Ascending aorta (tissue), 2 donors: ENCODE measurements at regions of chr21 and their contacts with region 1.

Region 1: DNA sequence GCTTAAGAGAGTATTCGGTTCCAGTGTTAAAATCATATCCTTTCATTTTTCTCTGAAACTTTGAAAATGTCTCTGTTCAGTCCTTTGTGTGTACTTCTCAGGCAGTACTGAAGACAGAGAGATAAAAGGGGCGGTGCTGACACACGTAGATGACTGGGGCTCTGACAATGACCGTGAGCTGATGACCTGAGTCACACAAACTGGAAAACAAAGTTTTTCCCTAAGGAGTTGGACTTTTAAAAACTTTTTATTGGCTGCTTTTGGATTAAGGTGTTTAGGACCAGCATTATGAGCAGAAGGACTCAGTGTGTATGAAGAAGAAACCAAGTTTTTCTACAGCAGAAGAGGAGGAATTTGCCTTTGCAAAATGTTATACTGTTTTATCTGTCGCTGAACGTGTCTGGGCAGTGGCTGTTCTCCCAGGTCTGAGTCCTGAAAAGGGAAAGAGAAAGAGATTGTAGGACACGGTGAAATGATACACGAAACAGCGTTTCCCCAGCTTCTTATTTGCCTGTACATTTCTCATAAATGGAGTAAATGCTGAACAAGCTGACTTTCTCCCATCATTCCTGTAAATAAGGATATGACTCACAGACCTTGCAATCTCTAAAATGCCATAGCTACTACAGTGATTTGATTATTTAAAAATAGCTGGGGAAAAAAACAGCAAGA is 51.5 kb downstream of the MAP3K7CL start:
- DNase-seq: no peak
- H3K4me3 ChIP-seq: peak overlapping the region; percentile 47 to 58
- H3K27ac ChIP-seq: peak overlapping the region; percentile 91 to 95
- H3K4me1 ChIP-seq: peaks cover 0 to 23% of the 10 kb centered on the region in 2 donors
- H3K27me3 ChIP-seq: no peaks in the 10 kb centered on the region
- CTCF ChIP-seq: no peak

Region 2: GRCh38 chr21:29125191-29125590 is 56.7 kb before region 1 on chr21:
- intact Hi-C with region 1: no loop called
- DNase-seq: no peak
- H3K4me3 ChIP-seq: no peak overlapping the region
- H3K27ac ChIP-seq: no peak overlapping the region
- H3K4me1 ChIP-seq: peaks cover 0 to 3% of the 10 kb centered on the region in 2 donors
- H3K27me3 ChIP-seq: no peaks in the 10 kb centered on the region
- CTCF ChIP-seq: no peak

Region 3: GRCh38 chr21:29208682-29209059 is 26.7 kb after region 1 on chr21:
- intact Hi-C with region 1: no loop called
- DNase-seq: no peak
- H3K4me3 ChIP-seq: no peak overlapping the region
- H3K27ac ChIP-seq: peak overlapping the region; percentile 31 to 48
- H3K4me1 ChIP-seq: peaks cover 0 to 3% of the 10 kb centered on the region in 2 donors
- H3K27me3 ChIP-seq: no peaks in the 10 kb centered on the region
- CTCF ChIP-seq: no peak

Region 4: DNA sequence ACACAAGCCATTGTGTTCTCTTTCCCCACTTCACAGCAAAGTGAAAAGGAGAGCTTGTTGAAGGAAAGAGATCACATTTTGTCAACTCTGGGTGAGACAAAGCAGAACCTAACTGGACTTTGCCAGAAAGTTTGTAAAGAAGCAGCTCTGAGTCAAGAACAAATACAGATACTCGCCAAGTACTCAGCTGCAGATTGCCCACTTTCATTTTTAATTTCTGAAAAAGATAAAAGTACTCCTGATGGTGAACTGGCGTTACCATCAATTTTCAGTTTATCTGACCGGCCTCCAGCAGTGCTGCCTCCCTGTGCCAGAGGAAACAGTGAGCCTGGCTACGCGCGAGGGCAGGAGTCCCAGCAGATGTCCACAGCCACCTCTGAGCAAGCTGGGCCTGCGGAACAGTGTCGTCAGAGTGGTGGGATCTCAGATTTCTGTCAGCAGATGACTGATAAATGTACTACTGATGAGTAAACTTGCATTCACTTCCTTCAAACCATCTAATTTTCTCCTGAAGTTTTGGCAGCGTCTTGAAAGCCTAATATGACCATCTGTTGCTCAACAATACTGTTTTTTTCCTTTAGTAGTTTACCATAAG is 160.5 kb after region 1 on chr21:
- intact Hi-C with region 1: loop called (anchors 5 kb)
- DNase-seq: peak; percentile 35 to 83
- H3K4me3 ChIP-seq: peak overlapping the region; percentile 18 to 34
- H3K27ac ChIP-seq: peak overlapping the region; percentile 28 to 70
- H3K4me1 ChIP-seq: peaks cover 8 to 39% of the 10 kb centered on the region in 2 donors
- H3K27me3 ChIP-seq: no peaks in the 10 kb centered on the region
- CTCF ChIP-seq: no peak